ENCODE measurements at regions of chr3 and their contacts with region 1.

Region 1: GRCh38 chr3:138923531-138923994 is 23.4 kb downstream of the FOXL2 start:
- DNase-seq: peak; percentile 89
- H3K4me3 Mint-ChIP-seq: no peak overlapping the region
- H3K27ac Mint-ChIP-seq: no peak overlapping the region
- H3K4me1 Mint-ChIP-seq: no peaks in the 10 kb centered on the region
- H3K27me3 Mint-ChIP-seq: peaks cover 2% of the 10 kb centered on the region

Region 2: GRCh38 chr3:138417559-138417982 is 506.0 kb before region 1 on chr3:
- CTCF ChIA-PET with region 1: interaction called, 52 read pairs
- POLR2A ChIA-PET with region 1: no interaction called
- intact Hi-C with region 1: loop called (anchors 1 kb)
- DNase-seq: peak; percentile 74
- H3K4me3 Mint-ChIP-seq: no peak overlapping the region
- H3K27ac Mint-ChIP-seq: no peak overlapping the region
- H3K4me1 Mint-ChIP-seq: no peaks in the 10 kb centered on the region
- H3K27me3 Mint-ChIP-seq: peaks cover 9% of the 10 kb centered on the region

Region 3: DNA sequence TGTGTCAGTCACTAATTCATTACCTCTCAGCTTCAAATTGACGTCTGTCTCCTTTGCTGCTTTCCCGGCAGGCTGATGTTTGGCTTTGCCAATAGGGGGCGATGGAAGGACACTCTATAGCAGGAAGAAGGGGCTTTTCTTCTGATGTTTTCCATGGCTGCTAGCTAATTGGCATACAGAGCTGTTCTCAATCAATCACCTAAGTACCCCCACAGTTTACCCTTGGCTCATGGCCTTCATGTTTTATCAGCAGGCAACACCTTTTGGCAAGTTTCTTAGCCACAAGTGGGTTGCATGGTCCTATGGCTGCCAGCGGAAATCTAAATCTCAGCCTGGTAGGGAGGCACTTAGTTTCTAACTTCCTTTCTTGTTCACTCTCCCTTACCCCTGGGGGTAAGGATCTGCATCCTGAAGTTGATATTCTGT is 444.1 kb before region 1 on chr3:
- CTCF ChIA-PET with region 1: interaction called, 12 read pairs
- POLR2A ChIA-PET with region 1: no interaction called
- intact Hi-C with region 1: loop called (anchors 2 kb)
- DNase-seq: peak; percentile 54
- H3K4me3 Mint-ChIP-seq: no peak overlapping the region
- H3K27ac Mint-ChIP-seq: no peak overlapping the region
- H3K4me1 Mint-ChIP-seq: no peaks in the 10 kb centered on the region
- H3K27me3 Mint-ChIP-seq: peaks cover 5% of the 10 kb centered on the region

Region 4: DNA sequence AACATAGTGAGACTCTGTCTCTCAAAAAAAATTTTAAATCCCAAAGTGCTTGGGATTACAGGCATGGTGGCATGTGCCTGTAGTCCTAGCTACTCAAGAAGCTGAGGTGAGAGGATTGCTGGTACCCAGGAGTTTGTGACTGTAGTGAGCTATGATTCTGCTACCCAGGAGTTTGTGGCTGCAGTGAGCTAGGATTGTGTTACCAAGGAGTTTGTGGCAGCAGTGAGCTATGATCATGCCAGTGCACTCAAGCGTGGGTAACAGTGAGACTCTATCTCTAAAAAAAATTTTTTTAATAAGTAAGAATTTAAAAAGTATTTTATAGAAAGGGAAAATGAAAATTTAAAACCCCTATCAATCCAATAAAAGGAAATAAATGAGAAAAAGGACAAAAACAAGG is 245.5 kb before region 1 on chr3:
- CTCF ChIA-PET with region 1: interaction called, 12 read pairs
- POLR2A ChIA-PET with region 1: no interaction called
- intact Hi-C with region 1: no loop called
- DNase-seq: no peak
- H3K4me3 Mint-ChIP-seq: no peak overlapping the region
- H3K27ac Mint-ChIP-seq: no peak overlapping the region
- H3K4me1 Mint-ChIP-seq: no peaks in the 10 kb centered on the region
- H3K27me3 Mint-ChIP-seq: no peaks in the 10 kb centered on the region

Region 5: DNA sequence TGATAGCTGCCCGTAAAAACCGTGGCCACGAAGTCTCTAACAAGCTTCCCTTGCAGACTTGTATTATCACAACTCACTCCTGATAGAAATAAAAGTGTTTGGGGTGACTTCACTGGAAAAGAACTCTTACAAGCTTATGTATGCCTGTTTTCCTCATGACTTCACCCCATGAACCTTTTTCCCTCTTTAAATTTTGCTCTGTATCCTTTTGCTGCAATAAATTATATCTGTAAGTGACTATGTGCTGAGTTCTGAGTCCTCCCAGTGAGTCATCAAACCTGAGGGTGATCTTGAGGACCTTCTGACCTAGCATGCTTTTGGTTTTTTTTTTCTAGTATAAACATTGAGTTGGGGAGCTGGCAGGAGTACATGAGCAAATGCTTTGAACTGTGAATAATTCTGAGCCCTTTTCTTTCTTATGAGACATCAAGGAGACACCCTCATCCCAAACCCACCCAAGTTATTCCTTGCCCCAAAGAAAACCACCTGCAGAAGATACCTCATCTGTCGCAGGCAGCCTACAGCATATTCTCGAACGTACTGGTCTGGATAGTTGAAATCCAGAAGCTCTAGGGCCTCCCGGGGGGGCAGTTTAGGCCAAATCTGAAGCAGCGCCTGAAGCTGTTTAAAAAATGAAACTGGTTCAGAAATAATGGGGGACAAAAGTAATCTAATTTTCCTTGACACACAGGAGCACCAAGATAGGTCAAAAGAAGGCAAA is 229.1 kb before region 1 on chr3:
- CTCF ChIA-PET with region 1: interaction called, 18 read pairs
- POLR2A ChIA-PET with region 1: no interaction called
- intact Hi-C with region 1: loop called (anchors 2 kb)
- DNase-seq: no peak
- H3K4me3 Mint-ChIP-seq: no peak overlapping the region
- H3K27ac Mint-ChIP-seq: no peak overlapping the region
- H3K4me1 Mint-ChIP-seq: no peaks in the 10 kb centered on the region
- H3K27me3 Mint-ChIP-seq: no peaks in the 10 kb centered on the region

Region 6: GRCh38 chr3:138705675-138706074 is 217.9 kb before region 1 on chr3:
- CTCF ChIA-PET with region 1: interaction called, 13 read pairs
- POLR2A ChIA-PET with region 1: no interaction called
- intact Hi-C with region 1: no loop called
- DNase-seq: no peak
- H3K4me3 Mint-ChIP-seq: no peak overlapping the region
- H3K27ac Mint-ChIP-seq: no peak overlapping the region
- H3K4me1 Mint-ChIP-seq: no peaks in the 10 kb centered on the region
- H3K27me3 Mint-ChIP-seq: no peaks in the 10 kb centered on the region

Measured in activated CD4-positive, alpha-beta memory T cell treated with anti-CD3 and anti-CD28 coated beads for 36 hours (primary cell).